Uterus (tissue), 4 donors: ENCODE measurements at regions of chr1 and their contacts with region 1.

Region 1: GRCh38 chr1:9455487-9456234 is 83.6 kb upstream of the SLC25A33 start:
- DNase-seq: peak; percentile 75 to 79
- H3K4me3 ChIP-seq: no peak overlapping the region
- H3K27ac ChIP-seq: peak overlapping the region; percentile 33 to 34
- H3K4me1 ChIP-seq: no peaks in the 10 kb centered on the region
- H3K27me3 ChIP-seq: no peaks in the 10 kb centered on the region
- CTCF ChIP-seq: peak; percentile 74 to 82 (median 78)
- POLR2A ChIP-seq: no peak

Region 2: GRCh38 chr1:9289090-9289534 is 166.5 kb before region 1 on chr1:
- intact Hi-C with region 1: loop called (anchors 10 kb)
- DNase-seq: peak; percentile 63 to 68
- H3K4me3 ChIP-seq: no peak overlapping the region
- H3K27ac ChIP-seq: peak overlapping the region in 1 of 2 donors; percentile 95
- H3K4me1 ChIP-seq: no peaks in the 10 kb centered on the region
- H3K27me3 ChIP-seq: no peaks in the 10 kb centered on the region
- CTCF ChIP-seq: peak; percentile 74 to 92 (median 86)
- POLR2A ChIP-seq: no peak

Region 3: GRCh38 chr1:9494929-9495758 is 39.5 kb after region 1 on chr1:
- intact Hi-C with region 1: no loop called
- DNase-seq: peak; percentile 25 to 57
- H3K4me3 ChIP-seq: peak overlapping the region in 1 of 2 donors; percentile 6
- H3K27ac ChIP-seq: no peak overlapping the region
- H3K4me1 ChIP-seq: no peaks in the 10 kb centered on the region
- H3K27me3 ChIP-seq: no peaks in the 10 kb centered on the region
- CTCF ChIP-seq: peak; percentile 90 to 95 (median 93)
- POLR2A ChIP-seq: peak in 1 of 2 donors; percentile 18

Region 4: DNA sequence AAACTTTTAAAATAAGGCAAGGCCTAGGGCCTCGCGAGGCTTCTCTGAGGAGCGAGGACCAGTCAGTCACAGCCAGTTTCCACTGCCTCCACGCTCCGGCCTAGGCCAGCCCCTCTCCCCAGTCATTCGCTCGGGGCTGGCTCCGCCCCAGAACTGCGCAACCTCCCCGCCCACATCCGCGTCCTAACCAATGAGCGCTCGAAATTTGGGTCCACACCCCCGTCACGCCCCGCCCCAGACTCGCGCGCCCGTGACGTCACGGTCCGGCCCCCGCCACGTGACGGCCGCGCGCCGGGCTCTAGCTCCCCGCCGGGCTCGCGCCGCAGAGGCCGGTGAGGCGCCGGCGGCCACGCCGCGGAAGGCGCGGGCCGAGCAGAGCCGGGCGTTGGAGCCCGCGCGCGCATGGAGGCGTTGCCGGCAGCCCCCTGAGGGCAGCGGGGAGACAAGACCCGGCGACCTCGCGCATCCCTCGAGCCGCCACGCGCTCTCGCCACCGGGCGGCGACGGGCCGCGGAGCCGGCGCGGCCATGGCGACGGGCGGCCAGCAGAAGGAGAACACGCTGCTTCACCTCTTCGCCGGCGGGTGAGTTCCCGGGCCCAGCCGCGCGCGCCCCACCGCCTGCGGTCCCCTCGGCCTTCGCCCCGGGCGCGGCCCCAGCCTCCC is 83.6 kb after region 1 on chr1 and contains the start of gene SLC25A33:
- intact Hi-C with region 1: no loop called
- DNase-seq: peak; percentile 97 to 98
- H3K4me3 ChIP-seq: peak within 1 kb of the TSS; percentile 54 to 68
- H3K27ac ChIP-seq: peak within 1 kb of the TSS; percentile 75 to 84
- H3K4me1 ChIP-seq: no peaks in the 10 kb centered on the region
- H3K27me3 ChIP-seq: no peaks in the 10 kb centered on the region
- CTCF ChIP-seq: peak in 1 of 4 experiments; percentile 24
- POLR2A ChIP-seq: peak; percentile 98 to 99
- total RNA-seq, gene SLC25A33: 1.0 to 6.1 (median 3.3) TPM